AG04449 (cell line): ENCODE measurements at regions of chr11 and their contacts with region 1.

Region 1: DNA sequence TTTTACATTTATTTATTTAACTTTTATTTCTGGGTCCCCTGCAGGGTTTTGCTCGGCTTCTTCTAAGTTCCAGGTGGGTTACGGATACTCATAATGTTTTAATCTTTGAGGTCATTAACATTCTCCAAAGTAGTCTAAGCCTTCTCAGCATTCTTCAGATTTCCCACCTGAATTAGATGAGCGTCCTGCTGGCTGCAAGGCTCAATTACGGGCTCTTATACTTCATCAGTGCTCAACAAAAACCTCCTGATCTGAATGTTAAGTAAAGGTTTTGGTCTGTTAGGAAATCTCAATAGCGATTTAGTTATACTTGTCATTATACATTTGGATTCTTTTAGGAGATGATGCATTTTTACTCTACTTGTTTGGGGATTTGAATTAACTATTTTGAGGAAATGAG is 27.3 kb upstream of the NFRKB start:
- DNase-seq: no peak
- H3K4me3 ChIP-seq: no peak overlapping the region
- CTCF ChIP-seq: no peak

Region 2: GRCh38 chr11:129911298-129911697 is 11.4 kb before region 1 on chr11:
- CTCF ChIA-PET with region 1: interaction called, 43 read pairs
- POLR2A ChIA-PET with region 1: no interaction called
- DNase-seq: no peak
- H3K4me3 ChIP-seq: no peak overlapping the region
- CTCF ChIP-seq: no peak

Region 3: DNA sequence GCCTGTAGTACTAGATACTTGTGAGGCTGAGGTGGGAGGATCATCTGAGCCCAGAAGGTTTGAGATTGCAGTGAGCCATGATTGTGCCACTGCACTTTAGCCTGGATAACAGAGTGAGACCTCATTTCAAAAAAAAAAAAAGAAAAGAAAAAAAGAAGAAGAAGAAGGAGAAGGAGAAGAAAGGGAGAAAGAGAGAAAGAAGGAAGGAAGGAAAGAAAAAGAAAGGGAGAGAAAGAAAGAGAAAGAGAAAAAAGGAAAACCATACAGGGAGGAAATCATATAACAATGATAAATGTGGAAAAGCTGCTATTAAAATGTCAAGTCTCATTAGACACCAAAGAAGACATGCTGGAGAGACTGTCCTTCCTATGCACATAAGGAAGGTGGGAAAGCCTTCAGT is 85.7 kb after region 1 on chr11:
- CTCF ChIA-PET with region 1: no interaction called
- POLR2A ChIA-PET with region 1: no interaction called
- DNase-seq: no peak
- H3K4me3 ChIP-seq: no peak overlapping the region
- CTCF ChIP-seq: no peak

Region 4: GRCh38 chr11:130118636-130119387 is 196.1 kb after region 1 on chr11:
- CTCF ChIA-PET with region 1: interaction called, 489 read pairs
- POLR2A ChIA-PET with region 1: no interaction called
- DNase-seq: no peak
- H3K4me3 ChIP-seq: no peak overlapping the region
- CTCF ChIP-seq: no peak

Region 5: GRCh38 chr11:130145975-130146776 is 223.5 kb after region 1 on chr11:
- CTCF ChIA-PET with region 1: interaction called, 10 read pairs
- POLR2A ChIA-PET with region 1: no interaction called
- DNase-seq: no peak
- H3K4me3 ChIP-seq: no peak overlapping the region
- CTCF ChIP-seq: peak; percentile 38

Region 6: GRCh38 chr11:130403271-130403804 is 480.7 kb after region 1 on chr11:
- CTCF ChIA-PET with region 1: no interaction called
- POLR2A ChIA-PET with region 1: no interaction called
- DNase-seq: peak; percentile 49
- H3K4me3 ChIP-seq: peak overlapping the region; percentile 35
- CTCF ChIP-seq: no peak